ENCODE measurements at regions of chr22 and their contacts with region 1.

Region 1: GRCh38 chr22:36884349-36885117 is 23.7 kb downstream of the NCF4 start:
- DNase-seq: no peak
- H3K4me3 Mint-ChIP-seq: no peak overlapping the region
- H3K27ac Mint-ChIP-seq: peak overlapping the region; percentile 56
- H3K4me1 Mint-ChIP-seq: peaks cover 39% of the 10 kb centered on the region
- H3K27me3 Mint-ChIP-seq: peaks cover 3% of the 10 kb centered on the region

Region 2: GRCh38 chr22:36873680-36874537 is 10.6 kb before region 1 on chr22:
- CTCF ChIA-PET with region 1: interaction called, 14 read pairs
- POLR2A ChIA-PET with region 1: interaction called, 3 read pairs
- intact Hi-C with region 1: no loop called
- DNase-seq: peak; percentile 76
- H3K4me3 Mint-ChIP-seq: no peak overlapping the region
- H3K27ac Mint-ChIP-seq: peak overlapping the region; percentile 90
- H3K4me1 Mint-ChIP-seq: peaks cover 19% of the 10 kb centered on the region
- H3K27me3 Mint-ChIP-seq: no peaks in the 10 kb centered on the region

Region 3: GRCh38 chr22:36901411-36902142 is 17.0 kb after region 1 on chr22:
- CTCF ChIA-PET with region 1: no interaction called
- POLR2A ChIA-PET with region 1: no interaction called
- intact Hi-C with region 1: no loop called
- DNase-seq: peak; percentile 32
- H3K4me3 Mint-ChIP-seq: peak overlapping the region; percentile 6
- H3K27ac Mint-ChIP-seq: peak overlapping the region; percentile 82
- H3K4me1 Mint-ChIP-seq: peaks cover 5% of the 10 kb centered on the region
- H3K27me3 Mint-ChIP-seq: peaks cover 47% of the 10 kb centered on the region

Measured in activated CD4-positive, alpha-beta memory T cell treated with anti-CD3 and anti-CD28 coated beads for 36 hours (primary cell).